ENCODE measurements at regions of chr1 and their contacts with region 1.

Region 1: GRCh38 chr1:158124999-158125398 is 55.7 kb upstream of the CD1D start:
- DNase-seq: peak; percentile 76 to 93 (median 87)
- H3K4me3 ChIP-seq: no peak overlapping the region
- H3K27ac ChIP-seq: no peak overlapping the region
- H3K4me1 ChIP-seq: no peaks in the 10 kb centered on the region
- H3K27me3 ChIP-seq: no peaks in the 10 kb centered on the region
- CTCF ChIP-seq: peak; percentile 64 to 94 (median 91)
- EP300 ChIP-seq: no peak
- POLR2A ChIP-seq: no peak

Region 2: GRCh38 chr1:157163273-157164127 is 961.5 kb before region 1 on chr1:
- intact Hi-C with region 1: loop called in 1 of 4 experiments (anchors 10 kb)
- DNase-seq: peak; percentile 36 to 76 (median 65)
- H3K4me3 ChIP-seq: no peak overlapping the region
- H3K27ac ChIP-seq: no peak overlapping the region
- H3K4me1 ChIP-seq: no peaks in the 10 kb centered on the region
- H3K27me3 ChIP-seq: no peaks in the 10 kb centered on the region
- CTCF ChIP-seq: peak; percentile 19 to 85 (median 54)
- EP300 ChIP-seq: no peak
- POLR2A ChIP-seq: no peak

Region 3: GRCh38 chr1:157952601-157953000 is 172.4 kb before region 1 on chr1:
- intact Hi-C with region 1: no loop called
- DNase-seq: no peak
- H3K4me3 ChIP-seq: no peak overlapping the region
- H3K27ac ChIP-seq: no peak overlapping the region
- H3K4me1 ChIP-seq: no peaks in the 10 kb centered on the region
- H3K27me3 ChIP-seq: no peaks in the 10 kb centered on the region
- CTCF ChIP-seq: no peak
- EP300 ChIP-seq: no peak
- POLR2A ChIP-seq: no peak

Region 4: DNA sequence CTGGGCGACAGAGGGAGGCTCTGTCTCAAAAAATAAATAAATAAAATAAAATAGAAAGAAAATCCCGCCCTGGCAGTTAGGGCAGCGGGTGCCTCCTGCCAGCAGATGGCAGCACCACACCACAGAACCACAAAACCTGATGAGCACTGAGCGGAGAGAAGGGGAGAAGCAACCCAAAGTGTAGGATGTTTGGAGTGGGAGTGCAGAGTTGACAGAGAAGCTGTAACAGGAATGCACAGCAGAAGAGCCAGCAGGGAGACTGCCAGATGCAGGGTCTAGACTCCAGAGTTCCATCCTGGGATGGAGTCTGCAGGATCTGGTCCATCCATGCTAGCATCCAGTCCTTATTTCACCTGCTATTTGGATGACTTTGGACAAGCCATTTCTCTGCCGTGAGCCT is 161.3 kb before region 1 on chr1:
- intact Hi-C with region 1: loop called in 2 of 4 experiments (anchors 2 to 5 kb)
- DNase-seq: peak; percentile 59 to 81 (median 76)
- H3K4me3 ChIP-seq: no peak overlapping the region
- H3K27ac ChIP-seq: no peak overlapping the region
- H3K4me1 ChIP-seq: no peaks in the 10 kb centered on the region
- H3K27me3 ChIP-seq: no peaks in the 10 kb centered on the region
- CTCF ChIP-seq: peak; percentile 76 to 88 (median 77)
- EP300 ChIP-seq: no peak
- POLR2A ChIP-seq: no peak

Region 5: DNA sequence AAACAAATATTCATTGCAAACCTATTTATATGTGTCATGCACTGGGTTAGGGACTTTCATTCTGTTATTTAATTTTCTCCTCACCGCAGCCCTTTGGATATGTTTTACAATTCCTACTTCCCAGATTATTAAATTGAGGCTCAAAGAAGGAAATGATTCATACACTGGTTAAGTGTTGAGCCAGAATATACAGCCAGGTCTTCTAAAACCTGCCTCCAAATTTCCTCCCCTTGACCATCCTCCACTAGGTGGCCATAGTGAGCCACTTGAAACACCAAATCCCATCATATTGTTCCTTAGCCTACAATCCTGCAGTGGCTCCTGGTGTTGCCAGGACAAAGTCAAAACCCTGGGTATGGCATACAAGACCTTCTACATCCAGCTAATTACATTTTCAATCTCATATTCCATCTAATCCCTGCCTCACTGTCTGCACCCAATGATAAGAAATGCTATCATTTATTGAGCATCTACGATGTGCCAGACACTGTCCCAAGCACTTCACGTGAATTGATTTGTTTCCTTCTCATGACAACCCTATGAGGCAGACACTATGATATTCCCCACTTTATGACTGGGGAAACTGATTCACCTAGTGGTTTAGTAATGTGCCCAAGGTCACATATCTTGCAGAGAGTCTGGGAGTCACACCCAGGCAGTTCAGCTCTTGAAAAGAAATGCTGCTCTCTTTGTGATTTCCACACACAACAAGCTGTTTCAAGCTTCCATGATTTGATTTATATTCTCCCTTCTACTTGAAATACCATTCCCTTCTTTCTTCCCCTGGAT is 155.1 kb before region 1 on chr1:
- intact Hi-C with region 1: loop called (anchors 2 to 5 kb)
- DNase-seq: peak in 2 of 5 donors; percentile 29 to 49
- H3K4me3 ChIP-seq: no peak overlapping the region
- H3K27ac ChIP-seq: no peak overlapping the region
- H3K4me1 ChIP-seq: no peaks in the 10 kb centered on the region
- H3K27me3 ChIP-seq: no peaks in the 10 kb centered on the region
- CTCF ChIP-seq: peak in 2 of 3 donors; percentile 26 to 35
- EP300 ChIP-seq: no peak
- POLR2A ChIP-seq: no peak

Region 6: GRCh38 chr1:158534496-158534895 is 409.5 kb after region 1 on chr1:
- intact Hi-C with region 1: no loop called
- DNase-seq: no peak
- H3K4me3 ChIP-seq: no peak overlapping the region
- H3K27ac ChIP-seq: no peak overlapping the region
- H3K4me1 ChIP-seq: no peaks in the 10 kb centered on the region
- H3K27me3 ChIP-seq: no peaks in the 10 kb centered on the region
- CTCF ChIP-seq: no peak
- EP300 ChIP-seq: no peak
- POLR2A ChIP-seq: no peak

Measured in ovary (tissue), 10 donors.